Activated naive CD8-positive, alpha-beta T cell treated with anti-CD3 and anti-CD28 coated beads, Interleukin-2, amount 10 ng/mL, durations not matched to agents 7 days and 5 days (primary cell): ENCODE measurements at regions of chr19 and their contacts with region 1.

Region 1: DNA sequence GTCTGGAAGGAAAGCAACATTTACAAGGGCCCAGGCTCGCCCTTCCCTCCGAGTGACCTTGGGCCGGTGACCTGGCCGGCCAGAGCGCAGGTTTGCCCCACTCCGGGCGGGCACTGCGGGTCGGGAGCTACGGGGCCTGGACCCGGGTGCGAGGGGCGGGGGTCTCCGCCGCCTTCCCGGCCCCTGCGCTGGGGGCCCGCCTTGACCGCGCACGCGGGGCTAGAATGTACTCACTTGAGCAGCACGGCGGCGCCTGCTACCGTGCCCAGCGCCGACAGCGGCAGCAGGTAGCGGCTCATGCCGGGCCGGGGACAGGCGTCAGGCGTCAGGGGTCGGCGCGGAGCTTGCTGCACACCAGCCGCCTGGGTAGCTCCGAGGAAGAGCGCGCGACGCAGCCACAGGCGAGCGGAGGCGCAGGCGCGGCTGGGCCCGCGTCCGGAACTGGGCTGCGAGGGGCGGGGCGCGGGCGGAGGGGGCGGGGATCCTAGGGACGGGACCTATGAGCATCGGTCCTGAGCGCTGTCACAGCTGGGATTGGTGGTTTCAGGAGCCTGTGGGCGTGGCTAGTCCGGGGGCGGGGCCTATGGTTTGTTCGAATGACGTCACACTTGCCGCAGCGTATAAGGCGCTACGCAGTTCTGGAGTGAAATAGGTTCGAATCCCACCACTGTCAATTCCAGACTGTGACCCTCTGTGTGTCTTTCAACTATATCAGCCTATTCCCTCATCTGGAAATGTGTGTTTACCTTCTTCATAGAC is at the start of gene RDH13:
- DNase-seq: peak; percentile 99
- ATAC-seq: peak; percentile 98
- H3K4me3 Mint-ChIP-seq: peak within 1 kb of the TSS; percentile 90
- H3K27ac Mint-ChIP-seq: peak within 1 kb of the TSS; percentile 86
- H3K4me1 Mint-ChIP-seq: peaks cover 11% of the 10 kb centered on the region
- H3K27me3 Mint-ChIP-seq: peaks cover 36% of the 10 kb centered on the region
- total RNA-seq, gene RDH13: 25.9 to 28.6 TPM

Region 2: DNA sequence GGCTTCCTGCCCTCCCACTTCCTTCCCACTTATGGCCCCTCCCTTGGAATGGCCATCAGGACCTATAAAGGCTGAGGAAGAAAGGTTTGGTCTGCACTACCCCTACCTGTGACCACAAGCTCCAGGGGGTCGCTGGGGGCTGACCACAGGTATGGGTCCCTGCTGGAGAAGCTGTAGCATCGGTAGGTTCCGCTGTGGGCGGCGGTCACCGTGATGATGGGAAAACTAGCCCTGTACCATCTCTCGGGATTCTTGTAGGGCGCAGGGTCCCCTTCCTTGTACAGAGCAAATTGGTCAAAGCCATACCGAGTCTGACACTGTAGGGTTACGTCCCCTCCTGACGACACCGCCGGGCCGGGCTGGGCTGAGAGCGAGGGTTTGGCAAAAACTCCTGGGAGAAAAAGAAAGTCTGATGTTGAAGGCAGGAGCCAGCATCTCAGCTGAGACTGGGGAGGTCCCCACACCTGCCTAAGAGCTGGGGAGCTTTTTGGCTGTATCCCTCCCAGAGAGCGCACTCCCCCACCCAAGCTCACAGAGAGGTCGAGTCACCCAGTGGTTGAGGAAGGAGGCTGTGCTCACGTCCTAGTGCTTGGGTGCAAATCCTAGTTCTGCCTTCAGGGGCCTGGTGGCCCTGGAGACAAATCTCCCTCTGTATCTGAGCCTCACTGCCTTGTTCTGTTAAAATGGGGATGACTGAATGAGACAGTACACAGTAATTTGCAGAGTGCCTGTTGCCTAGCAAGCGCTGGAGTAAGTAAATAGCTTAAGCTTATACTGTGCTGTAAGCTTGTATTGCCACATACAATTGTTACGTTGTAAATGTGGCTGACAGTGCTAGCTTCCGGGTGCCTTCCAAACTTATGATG is 35.2 kb before region 1 on chr19:
- POLR2A ChIA-PET with region 1: no interaction called
- DNase-seq: no peak
- ATAC-seq: no peak
- H3K4me3 Mint-ChIP-seq: no peak overlapping the region
- H3K27ac Mint-ChIP-seq: peak overlapping the region; percentile 48
- H3K4me1 Mint-ChIP-seq: peaks cover 4% of the 10 kb centered on the region
- H3K27me3 Mint-ChIP-seq: no peaks in the 10 kb centered on the region

Region 3: GRCh38 chr19:55080968-55081772 is 18.3 kb after region 1 on chr19:
- POLR2A ChIA-PET with region 1: interaction called, 11 read pairs
- DNase-seq: peak; percentile 98
- ATAC-seq: peak; percentile 80
- H3K4me3 Mint-ChIP-seq: peak overlapping the region; percentile 83
- H3K27ac Mint-ChIP-seq: peak overlapping the region; percentile 97
- H3K4me1 Mint-ChIP-seq: peaks cover 11% of the 10 kb centered on the region
- H3K27me3 Mint-ChIP-seq: peaks cover 38% of the 10 kb centered on the region

Region 4: DNA sequence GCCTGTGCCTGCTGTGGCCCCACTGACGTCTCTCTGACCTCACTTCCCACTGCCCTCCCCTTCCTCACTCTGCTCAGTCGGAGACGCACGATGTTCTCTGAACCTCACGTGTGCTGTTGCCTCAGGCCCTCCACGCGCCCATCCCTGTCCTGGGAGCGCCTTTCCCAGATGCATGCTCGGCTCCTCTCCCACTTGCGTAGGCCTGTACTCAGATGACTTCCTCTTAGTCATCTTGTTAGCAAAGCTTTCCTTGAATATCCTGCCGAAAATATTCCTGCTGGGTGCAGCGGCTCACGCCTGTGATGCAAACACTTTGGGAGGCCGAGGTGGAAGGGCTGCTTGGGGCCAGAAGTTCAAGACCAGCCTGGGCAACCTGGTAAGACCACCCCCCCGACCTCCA is 126.5 kb after region 1 on chr19:
- POLR2A ChIA-PET with region 1: no interaction called
- DNase-seq: no peak
- ATAC-seq: no peak
- H3K4me3 Mint-ChIP-seq: peak overlapping the region; percentile 81
- H3K27ac Mint-ChIP-seq: peak overlapping the region; percentile 73
- H3K4me1 Mint-ChIP-seq: peaks cover 23% of the 10 kb centered on the region
- H3K27me3 Mint-ChIP-seq: peaks cover 11% of the 10 kb centered on the region